ENCODE measurements at regions of chr22 and their contacts with region 1.

Region 1: GRCh38 chr22:32528984-32529982 is 54.7 kb downstream of the FBXO7 start:
- DNase-seq: peak; percentile 85
- CTCF ChIP-seq: peak; percentile 72

Region 2: GRCh38 chr22:32311551-32312071 is 217.7 kb before region 1 on chr22:
- CTCF ChIA-PET with region 1: no interaction called
- POLR2A ChIA-PET with region 1: no interaction called
- DNase-seq: no peak
- CTCF ChIP-seq: no peak

Region 3: DNA sequence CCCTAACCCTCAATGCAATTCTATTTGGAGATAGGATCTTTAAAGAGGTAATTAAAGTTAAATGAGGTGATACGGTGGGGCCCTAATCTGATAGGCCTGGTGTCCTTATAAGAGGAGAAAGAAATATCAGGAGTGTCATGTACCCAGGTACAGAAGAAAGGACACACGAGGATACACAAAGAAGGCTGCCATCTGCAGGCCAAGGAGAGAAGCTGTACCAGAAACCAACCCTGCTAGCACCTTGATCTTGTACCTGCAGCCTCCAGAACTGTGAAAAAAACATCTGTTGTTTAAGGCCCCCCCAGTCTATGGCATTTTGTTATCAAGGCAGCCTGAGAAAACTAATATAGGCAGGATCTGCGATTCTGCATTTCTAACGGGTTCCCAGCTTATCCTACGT is 10.4 kb before region 1 on chr22:
- CTCF ChIA-PET with region 1: interaction called, 51 read pairs
- POLR2A ChIA-PET with region 1: interaction called, 5 read pairs
- DNase-seq: no peak
- CTCF ChIP-seq: peak; percentile 38

Region 4: DNA sequence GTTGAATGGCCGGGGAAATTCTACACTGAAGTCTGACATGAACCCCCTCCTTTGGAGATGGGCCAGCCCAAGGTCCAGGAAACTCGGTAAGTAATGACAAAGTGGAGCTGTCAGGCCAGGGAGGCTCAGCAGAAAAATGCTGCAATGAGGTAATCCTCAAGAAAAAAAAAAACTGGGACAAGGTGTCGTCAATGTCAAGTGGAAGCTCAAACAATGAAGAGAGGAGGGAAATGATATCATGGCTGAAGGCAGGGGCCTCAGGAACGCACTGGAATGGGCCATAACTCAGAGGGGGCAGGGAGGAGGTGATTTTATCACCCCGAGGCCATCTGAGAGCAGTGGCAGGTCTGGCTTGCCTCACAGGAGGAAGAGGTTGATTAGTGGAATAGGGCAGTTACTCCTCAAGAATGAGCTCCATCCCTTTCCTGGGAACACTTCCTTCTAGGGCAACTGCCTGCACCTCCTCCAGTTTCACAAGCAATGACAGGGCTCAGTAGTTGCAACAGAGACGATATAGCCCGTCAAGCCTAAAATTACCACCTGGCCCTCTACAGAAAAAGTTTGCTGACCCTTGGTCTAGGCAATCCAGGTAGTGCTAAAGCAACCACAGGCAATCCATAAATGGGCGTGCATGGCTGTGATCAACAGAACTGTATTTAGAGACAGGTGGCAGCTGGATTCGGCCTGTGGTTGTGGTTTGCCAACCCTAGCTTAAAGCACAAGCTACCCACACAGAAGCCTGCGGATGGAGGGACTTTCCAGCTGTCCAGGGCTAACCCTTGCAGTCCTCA is 10.5 kb after region 1 on chr22:
- CTCF ChIA-PET with region 1: interaction called, 12 read pairs
- POLR2A ChIA-PET with region 1: no interaction called
- DNase-seq: no peak
- CTCF ChIP-seq: no peak